Activated B cell treated with CpG ODN at 0.5 μM for 24 hours (primary cell): ENCODE measurements at regions of chr3 and their contacts with region 1.

Region 1: GRCh38 chr3:186849374-186849975 is 7.0 kb downstream of the ADIPOQ start:
- DNase-seq: no peak
- ATAC-seq: peak; percentile 79
- H3K4me3 Mint-ChIP-seq: no peak overlapping the region
- H3K27ac Mint-ChIP-seq: peak overlapping the region; percentile 41
- H3K4me1 Mint-ChIP-seq: peaks cover 13% of the 10 kb centered on the region
- H3K27me3 Mint-ChIP-seq: peaks cover 10% of the 10 kb centered on the region
- CTCF ChIP-seq: no peak

Region 2: DNA sequence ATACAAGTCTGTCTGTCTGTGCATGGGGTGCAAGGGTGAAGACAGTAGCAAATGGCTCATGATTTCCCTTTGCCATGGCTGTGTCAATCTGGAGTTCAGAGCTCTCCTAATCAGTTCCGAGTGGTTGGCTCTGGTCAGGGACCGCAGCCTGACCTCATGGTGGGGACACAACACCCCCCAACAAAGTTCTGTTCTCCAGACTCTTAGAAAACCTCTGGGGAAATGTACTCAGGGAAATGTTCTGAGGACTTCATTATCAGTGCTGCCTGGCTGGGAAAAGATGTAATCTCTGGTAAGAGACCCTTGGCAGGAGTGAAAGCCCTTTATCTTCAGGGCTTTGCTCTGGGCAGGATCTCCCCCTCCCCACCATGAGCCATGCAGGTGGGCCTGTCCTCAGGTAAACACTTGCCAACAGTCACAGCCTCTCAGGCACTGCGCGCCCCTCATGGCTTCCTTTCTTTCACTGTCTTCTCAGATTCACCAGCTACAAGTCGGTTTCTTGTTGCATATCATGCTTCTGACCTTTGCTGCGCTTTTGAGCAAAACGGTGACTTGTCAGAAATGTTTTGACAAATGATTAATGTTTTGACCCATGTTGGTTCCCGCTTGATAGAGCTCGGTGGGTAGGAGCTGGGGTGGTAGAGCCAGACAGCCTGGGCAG is 176.3 kb after region 1 on chr3:
- CTCF ChIA-PET with region 1: interaction called, 12 read pairs
- POLR2A ChIA-PET with region 1: interaction called, 9 read pairs
- intact Hi-C with region 1: loop called (anchors 5 kb)
- DNase-seq: no peak
- ATAC-seq: peak; percentile 51
- H3K4me3 Mint-ChIP-seq: peak overlapping the region; percentile 84
- H3K27ac Mint-ChIP-seq: peak overlapping the region; percentile 93
- H3K4me1 Mint-ChIP-seq: peaks cover 93% of the 10 kb centered on the region
- H3K27me3 Mint-ChIP-seq: no peaks in the 10 kb centered on the region
- CTCF ChIP-seq: no peak

Region 3: GRCh38 chr3:187041362-187042307 is 192.2 kb after region 1 on chr3:
- CTCF ChIA-PET with region 1: interaction called, 13 read pairs
- POLR2A ChIA-PET with region 1: no interaction called
- intact Hi-C with region 1: no loop called
- DNase-seq: no peak
- ATAC-seq: peak; percentile 81
- H3K4me3 Mint-ChIP-seq: peak overlapping the region; percentile 74
- H3K27ac Mint-ChIP-seq: peak overlapping the region; percentile 97
- H3K4me1 Mint-ChIP-seq: peaks cover 83% of the 10 kb centered on the region
- H3K27me3 Mint-ChIP-seq: no peaks in the 10 kb centered on the region
- CTCF ChIP-seq: no peak

Region 4: GRCh38 chr3:187112934-187113793 is 263.7 kb after region 1 on chr3:
- CTCF ChIA-PET with region 1: interaction called, 36 read pairs
- POLR2A ChIA-PET with region 1: interaction called, 5 read pairs
- intact Hi-C with region 1: loop called (anchors 1 kb)
- DNase-seq: no peak
- ATAC-seq: peak; percentile 49
- H3K4me3 Mint-ChIP-seq: no peak overlapping the region
- H3K27ac Mint-ChIP-seq: no peak overlapping the region
- H3K4me1 Mint-ChIP-seq: peaks cover 9% of the 10 kb centered on the region
- H3K27me3 Mint-ChIP-seq: no peaks in the 10 kb centered on the region
- CTCF ChIP-seq: no peak

Region 5: DNA sequence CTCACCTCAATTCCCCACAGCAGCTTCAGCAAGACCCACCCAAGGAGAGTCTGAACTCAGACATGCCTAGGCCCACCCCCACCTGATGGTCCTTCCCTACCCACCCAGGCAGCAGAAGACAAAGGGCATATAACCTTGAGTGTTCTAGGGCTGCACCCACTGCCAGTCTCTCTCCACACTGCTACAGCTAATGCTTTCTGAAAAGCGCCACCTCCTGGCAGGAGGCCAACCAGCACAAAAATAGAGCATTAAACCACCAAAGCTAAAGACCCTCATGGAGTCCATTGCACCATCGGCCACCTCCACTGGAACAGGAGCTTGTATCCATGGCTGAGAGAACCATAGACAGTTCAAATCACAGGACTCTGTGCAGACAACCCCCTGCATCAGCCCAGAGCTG is 301.1 kb after region 1 on chr3:
- CTCF ChIA-PET with region 1: interaction called, 74 read pairs
- POLR2A ChIA-PET with region 1: interaction called, 4 read pairs
- intact Hi-C with region 1: loop called (anchors 1 kb)
- DNase-seq: peak; percentile 54
- ATAC-seq: peak; percentile 66
- H3K4me3 Mint-ChIP-seq: no peak overlapping the region
- H3K27ac Mint-ChIP-seq: no peak overlapping the region
- H3K4me1 Mint-ChIP-seq: no peaks in the 10 kb centered on the region
- H3K27me3 Mint-ChIP-seq: peaks cover 5% of the 10 kb centered on the region
- CTCF ChIP-seq: no peak

Region 6: GRCh38 chr3:187714404-187714979 is 865.0 kb after region 1 on chr3:
- CTCF ChIA-PET with region 1: no interaction called
- POLR2A ChIA-PET with region 1: no interaction called
- intact Hi-C with region 1: loop called (anchors 5 kb)
- DNase-seq: peak; percentile 32
- ATAC-seq: peak; percentile 98
- H3K4me3 Mint-ChIP-seq: no peak overlapping the region
- H3K27ac Mint-ChIP-seq: no peak overlapping the region
- H3K4me1 Mint-ChIP-seq: no peaks in the 10 kb centered on the region
- H3K27me3 Mint-ChIP-seq: no peaks in the 10 kb centered on the region
- CTCF ChIP-seq: no peak